Common myeloid progenitor, CD34-positive (primary cell): ENCODE measurements at regions of chr11 and their contacts with region 1.

Region 1: GRCh38 chr11:118171269-118172062 is 5.0 kb downstream of the SCN2B start:
- DNase-seq: peak; percentile 61 to 80 (median 71)
- H3K4me3 ChIP-seq: no peak overlapping the region
- H3K27ac ChIP-seq: no peak overlapping the region
- H3K4me1 ChIP-seq: peaks cover 0 to 8% (median 6%) of the 10 kb centered on the region in 4 experiments
- H3K27me3 ChIP-seq: peaks cover 0 to 8% (median 0%) of the 10 kb centered on the region in 5 experiments

Region 2: DNA sequence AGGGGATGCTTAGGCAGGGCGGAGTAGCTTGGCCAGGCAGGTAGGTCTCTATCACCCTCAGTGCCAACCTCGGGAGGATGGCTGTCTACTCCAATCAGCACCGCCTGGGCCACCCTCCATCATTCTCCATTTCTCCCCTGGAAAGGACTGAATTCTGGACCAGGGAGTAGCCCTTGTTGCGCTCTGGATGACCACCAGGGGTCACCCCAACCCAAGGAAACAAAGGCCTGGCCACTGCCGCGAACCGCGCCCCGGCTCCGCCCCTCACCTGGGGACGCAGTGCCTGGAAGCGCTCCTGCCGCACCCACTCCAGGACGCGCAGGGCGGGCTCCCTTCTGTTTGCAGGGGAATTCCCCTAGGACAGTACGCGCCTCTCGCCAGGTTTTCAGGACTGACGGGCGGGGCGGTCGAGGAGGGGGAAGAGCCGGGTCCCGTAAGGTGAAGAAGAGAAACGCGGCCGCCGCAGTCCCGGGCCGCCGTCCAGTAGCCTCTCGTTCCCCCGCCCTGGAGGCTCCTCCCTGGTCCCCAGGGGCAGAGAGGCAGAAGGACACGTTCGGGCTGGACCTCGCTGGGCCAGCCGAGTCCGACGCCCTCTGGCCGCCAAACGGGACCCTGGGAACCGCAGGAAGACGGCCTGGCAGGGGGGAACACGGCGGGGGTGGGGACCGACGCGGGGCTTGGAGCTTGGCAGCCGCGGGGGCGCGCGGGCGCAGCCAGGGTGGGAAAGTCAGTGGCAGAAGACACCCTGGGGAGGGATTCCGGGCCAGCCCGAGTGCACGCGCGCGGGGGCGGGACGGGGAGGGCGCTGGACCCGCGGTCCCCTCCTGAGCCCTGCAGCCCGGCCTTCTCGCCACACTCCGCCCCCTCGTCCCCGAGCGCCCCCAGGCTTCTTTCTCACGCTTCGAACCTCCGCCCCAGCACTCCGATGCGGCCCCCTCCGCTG is 25.9 kb before region 1 on chr11:
- CTCF ChIA-PET with region 1: interaction called, 71 read pairs
- POLR2A ChIA-PET with region 1: no interaction called
- DNase-seq: peak; percentile 73 to 83 (median 79)
- H3K4me3 ChIP-seq: peak overlapping the region; percentile 60 to 85 (median 70)
- H3K27ac ChIP-seq: no peak overlapping the region
- H3K4me1 ChIP-seq: peaks cover 3 to 21% (median 6%) of the 10 kb centered on the region in 4 experiments
- H3K27me3 ChIP-seq: peaks cover 0 to 12% (median 0%) of the 10 kb centered on the region in 5 experiments

Region 3: GRCh38 chr11:118156531-118157185 is 14.8 kb before region 1 on chr11:
- CTCF ChIA-PET with region 1: interaction called, 99 read pairs
- POLR2A ChIA-PET with region 1: no interaction called
- DNase-seq: peak; percentile 46 to 70 (median 68)
- H3K4me3 ChIP-seq: peak overlapping the region in 1 of 7 experiments; percentile 28
- H3K27ac ChIP-seq: no peak overlapping the region
- H3K4me1 ChIP-seq: peaks cover 0 to 24% (median 16%) of the 10 kb centered on the region in 4 experiments
- H3K27me3 ChIP-seq: peaks cover 0 to 68% (median 36%) of the 10 kb centered on the region in 5 experiments

Region 4: DNA sequence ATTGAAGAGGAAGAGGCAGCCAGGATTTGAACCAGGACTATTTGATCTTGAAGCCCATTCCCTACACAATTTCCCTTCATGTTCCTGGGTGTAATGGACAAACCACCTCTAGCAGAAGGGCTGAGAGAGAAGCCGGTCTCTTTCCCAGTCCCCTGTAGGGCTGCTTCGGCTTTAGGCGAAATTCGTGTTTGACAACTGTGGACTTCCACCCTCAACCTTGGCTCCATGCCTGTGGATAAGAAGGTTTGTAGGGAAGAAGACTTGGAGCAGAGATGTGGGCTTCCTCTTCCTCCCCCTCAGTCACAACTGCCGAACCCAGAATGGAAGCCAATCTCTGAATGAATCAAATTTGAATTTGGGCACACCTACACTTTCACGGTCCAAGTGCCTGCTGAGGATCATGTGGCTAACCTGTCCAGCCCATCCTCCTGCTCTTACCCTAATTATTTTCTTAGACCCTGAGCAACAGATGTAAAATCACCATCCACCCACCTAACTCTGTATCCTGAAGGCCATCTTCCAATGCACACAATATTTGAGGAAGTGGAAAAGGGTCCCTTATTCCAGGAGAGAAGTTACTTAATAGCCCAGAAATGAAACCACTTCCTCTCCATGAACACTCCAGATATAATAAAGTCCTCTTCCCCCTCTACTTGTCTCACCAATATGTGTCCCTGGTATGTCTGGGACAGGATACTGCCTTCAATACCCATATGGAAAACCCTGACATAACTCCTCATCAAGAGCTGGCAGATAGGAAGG is 15.1 kb after region 1 on chr11:
- CTCF ChIA-PET with region 1: interaction called, 20 read pairs
- POLR2A ChIA-PET with region 1: no interaction called
- DNase-seq: peak in 2 of 3 donors; percentile 27 to 30
- H3K4me3 ChIP-seq: no peak overlapping the region
- H3K27ac ChIP-seq: no peak overlapping the region
- H3K4me1 ChIP-seq: peaks cover 2 to 31% (median 6%) of the 10 kb centered on the region in 4 experiments
- H3K27me3 ChIP-seq: no peaks in the 10 kb centered on the region

Region 5: GRCh38 chr11:118358071-118358470 is 186.6 kb after region 1 on chr11:
- CTCF ChIA-PET with region 1: no interaction called
- POLR2A ChIA-PET with region 1: no interaction called
- DNase-seq: no peak
- H3K4me3 ChIP-seq: no peak overlapping the region
- H3K27ac ChIP-seq: no peak overlapping the region
- H3K4me1 ChIP-seq: peaks cover 5 to 15% (median 14%) of the 10 kb centered on the region in 4 experiments
- H3K27me3 ChIP-seq: no peaks in the 10 kb centered on the region